Naive thymus-derived CD4-positive, alpha-beta T cell (primary cell): ENCODE measurements at regions of chr20 and their contacts with region 1.

Region 1: DNA sequence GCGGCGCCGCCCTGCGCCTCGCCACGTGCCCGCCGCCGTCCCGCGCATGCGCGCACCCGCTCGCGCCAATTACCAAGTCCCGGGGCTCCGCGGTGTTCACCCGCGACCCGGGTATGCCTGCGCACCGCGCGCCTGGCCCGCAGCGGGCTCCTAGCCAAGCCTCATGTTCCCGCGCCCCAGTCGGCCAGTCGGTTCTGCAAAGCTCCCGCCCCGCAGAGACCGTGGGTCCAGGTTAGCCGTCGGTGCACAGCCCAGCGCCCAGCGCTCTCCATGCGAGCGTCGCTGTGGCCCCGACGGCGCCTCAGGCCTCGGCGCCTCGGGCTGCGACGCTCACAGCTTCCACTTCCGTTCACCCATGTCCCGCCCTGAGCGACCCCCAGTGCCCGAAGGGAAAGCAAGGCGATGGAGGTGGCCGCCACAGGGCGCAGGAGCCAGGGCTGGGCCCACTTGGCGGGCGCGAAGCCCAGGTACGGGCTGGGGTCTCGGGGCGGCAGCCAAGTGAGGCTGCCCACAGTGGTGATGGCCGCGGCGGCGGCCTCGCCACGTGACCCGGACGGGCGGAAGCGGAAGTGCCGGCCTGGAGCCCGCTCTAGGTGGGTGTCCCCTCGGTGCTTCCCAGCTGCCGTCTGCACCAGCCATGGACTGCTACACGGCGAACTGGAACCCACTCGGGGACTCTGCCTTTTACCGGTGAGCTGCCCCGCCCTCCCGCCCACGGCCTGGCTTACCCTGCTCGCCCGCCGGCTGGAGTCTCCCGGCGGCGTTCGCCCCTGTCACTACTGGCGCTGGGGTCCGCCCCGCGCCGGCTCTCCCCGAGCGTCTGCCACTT is at the starts of genes PCED1A and VPS16:
- DNase-seq: peak; percentile 83 to 94 (median 90)
- ATAC-seq: peak; percentile 97
- H3K4me3 ChIP-seq: peak within 1 kb of the TSS; percentile 72
- H3K4me3 Mint-ChIP-seq: peak within 1 kb of the TSS; percentile 83 to 93 (median 90)
- H3K27ac ChIP-seq: peak within 1 kb of the TSS; percentile 77
- H3K27ac Mint-ChIP-seq: peak within 1 kb of the TSS; percentile 67 to 95 (median 92)
- H3K4me1 ChIP-seq: peaks cover 15 to 21% of the 10 kb centered on the region in 2 donors
- H3K4me1 Mint-ChIP-seq: peaks cover 18 to 48% (median 45%) of the 10 kb centered on the region in 7 donors
- H3K27me3 ChIP-seq: no peaks in the 10 kb centered on the region
- H3K27me3 Mint-ChIP-seq: no peaks in the 10 kb centered on the region
- total RNA-seq, gene PCED1A: 27.8 to 105 (median 72.5) TPM
- total RNA-seq, gene VPS16: 45.5 to 62.4 (median 56.1) TPM

Region 2: DNA sequence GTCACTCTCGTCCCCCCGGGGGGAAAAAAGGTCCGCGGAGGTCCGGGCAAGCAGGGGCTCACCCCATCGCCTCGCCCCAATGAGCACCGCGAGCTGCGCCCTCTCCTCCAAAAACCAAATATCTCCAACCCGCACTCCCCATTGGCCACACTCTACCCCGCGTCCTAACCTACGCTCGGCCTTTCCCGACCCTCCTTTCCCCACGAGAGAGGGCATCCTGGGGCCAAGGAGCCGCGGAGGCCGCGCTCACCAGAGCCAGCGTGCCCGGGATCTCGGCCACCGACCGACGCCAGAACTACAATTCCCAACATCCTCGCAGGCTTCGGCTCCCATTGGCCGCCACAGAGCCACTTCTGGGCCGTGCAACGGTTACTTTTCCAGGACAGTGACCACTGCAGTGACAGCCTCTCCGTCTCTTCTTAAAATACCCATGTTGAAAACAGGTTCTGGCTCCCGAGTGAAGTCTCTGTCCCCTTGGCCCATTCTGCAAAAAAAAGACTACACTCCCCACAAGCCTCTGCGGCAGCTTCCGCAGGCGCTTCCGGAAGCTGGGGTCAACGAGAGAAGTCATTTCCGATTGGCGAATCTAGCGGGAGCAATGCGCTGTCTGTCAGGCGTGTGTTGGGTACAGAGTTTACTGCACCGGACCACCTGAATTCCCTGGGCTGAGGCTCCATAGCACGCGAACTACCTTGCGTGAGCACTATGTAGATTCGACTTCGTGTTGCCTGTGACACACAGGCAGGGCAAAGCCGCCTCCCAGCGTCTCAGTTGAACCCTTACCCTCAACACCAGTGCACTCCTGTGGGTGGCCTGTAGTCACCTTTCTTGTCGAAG is 331.5 kb before region 1 on chr20 and contains the start of gene ZNF343:
- CTCF ChIA-PET with region 1: no interaction called
- POLR2A ChIA-PET with region 1: interaction called, 5 read pairs
- intact Hi-C with region 1: loop called in 1 of 2 experiments (anchors 2 kb)
- DNase-seq: peak; percentile 61 to 84 (median 82)
- ATAC-seq: peak; percentile 97
- H3K4me3 ChIP-seq: peak within 1 kb of the TSS; percentile 97
- H3K4me3 Mint-ChIP-seq: peak within 1 kb of the TSS; percentile 92 to 100 (median 98)
- H3K27ac ChIP-seq: peak within 1 kb of the TSS; percentile 84
- H3K27ac Mint-ChIP-seq: peak within 1 kb of the TSS; percentile 90 to 99 (median 98)
- H3K4me1 ChIP-seq: peaks cover 6 to 7% of the 10 kb centered on the region in 2 donors
- H3K4me1 Mint-ChIP-seq: peaks cover 11 to 30% (median 25%) of the 10 kb centered on the region in 7 donors
- H3K27me3 ChIP-seq: no peaks in the 10 kb centered on the region
- H3K27me3 Mint-ChIP-seq: peaks cover 8 to 28% (median 12%) of the 10 kb centered on the region in 5 donors
- total RNA-seq, gene ZNF343: 7.5 to 14.4 (median 11.8) TPM

Region 3: DNA sequence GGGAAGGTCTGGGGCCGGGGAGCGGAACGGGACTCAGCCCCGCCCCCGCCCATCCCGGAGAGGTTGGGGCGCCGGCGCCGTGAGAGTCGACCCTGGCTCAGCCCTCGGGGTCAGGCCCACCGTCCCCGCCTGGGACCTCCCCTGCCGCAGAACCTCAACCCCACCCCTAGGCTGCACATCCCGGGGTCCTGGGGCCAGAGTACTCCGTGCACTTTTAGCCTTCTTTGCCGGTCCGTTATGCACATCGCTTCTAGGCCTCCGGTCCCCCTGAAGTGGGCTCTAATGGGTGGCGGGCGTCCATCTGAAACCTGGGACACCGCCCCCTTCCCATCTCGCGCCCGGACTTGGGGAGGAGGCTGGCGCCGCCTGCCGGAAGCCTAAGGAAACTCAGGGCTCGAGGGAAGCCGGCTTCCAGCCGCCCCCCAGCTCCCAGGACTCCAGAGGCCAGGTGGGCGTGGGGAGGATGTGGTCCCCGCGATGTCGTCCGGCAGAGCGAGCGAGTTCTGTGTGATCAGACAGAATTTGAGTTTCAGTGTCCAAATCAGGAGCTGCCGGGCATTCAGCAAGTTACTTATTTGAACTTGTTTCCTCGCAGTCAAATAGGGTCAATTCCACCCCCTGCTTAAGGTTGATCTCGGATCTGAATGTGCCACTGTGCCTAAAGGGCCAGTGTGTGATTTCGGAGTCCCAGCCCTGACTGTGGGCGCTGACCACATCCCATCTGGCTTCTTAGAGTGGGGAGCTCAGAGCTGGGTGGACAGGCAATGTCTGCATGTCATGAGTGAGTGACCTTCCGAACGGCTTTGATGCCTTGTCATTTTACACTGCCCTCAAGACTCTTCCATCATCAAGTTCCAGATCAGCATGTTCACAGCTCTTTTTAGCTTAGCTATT is 87.5 kb before region 1 on chr20:
- CTCF ChIA-PET with region 1: no interaction called
- POLR2A ChIA-PET with region 1: no interaction called
- intact Hi-C with region 1: loop called (anchors 2 to 5 kb)
- DNase-seq: peak; percentile 36 to 63 (median 53)
- ATAC-seq: peak; percentile 48
- H3K4me3 ChIP-seq: peak overlapping the region; percentile 64
- H3K4me3 Mint-ChIP-seq: peak overlapping the region; percentile 74 to 90 (median 86)
- H3K27ac ChIP-seq: no peak overlapping the region
- H3K27ac Mint-ChIP-seq: peak overlapping the region in 8 of 9 donors; percentile 17 to 85 (median 56)
- H3K4me1 ChIP-seq: peaks cover 12 to 18% of the 10 kb centered on the region in 2 donors
- H3K4me1 Mint-ChIP-seq: peaks cover 20 to 35% (median 27%) of the 10 kb centered on the region in 7 donors
- H3K27me3 ChIP-seq: no peaks in the 10 kb centered on the region
- H3K27me3 Mint-ChIP-seq: peaks cover 6 to 54% (median 9%) of the 10 kb centered on the region in 5 donors

Region 4: DNA sequence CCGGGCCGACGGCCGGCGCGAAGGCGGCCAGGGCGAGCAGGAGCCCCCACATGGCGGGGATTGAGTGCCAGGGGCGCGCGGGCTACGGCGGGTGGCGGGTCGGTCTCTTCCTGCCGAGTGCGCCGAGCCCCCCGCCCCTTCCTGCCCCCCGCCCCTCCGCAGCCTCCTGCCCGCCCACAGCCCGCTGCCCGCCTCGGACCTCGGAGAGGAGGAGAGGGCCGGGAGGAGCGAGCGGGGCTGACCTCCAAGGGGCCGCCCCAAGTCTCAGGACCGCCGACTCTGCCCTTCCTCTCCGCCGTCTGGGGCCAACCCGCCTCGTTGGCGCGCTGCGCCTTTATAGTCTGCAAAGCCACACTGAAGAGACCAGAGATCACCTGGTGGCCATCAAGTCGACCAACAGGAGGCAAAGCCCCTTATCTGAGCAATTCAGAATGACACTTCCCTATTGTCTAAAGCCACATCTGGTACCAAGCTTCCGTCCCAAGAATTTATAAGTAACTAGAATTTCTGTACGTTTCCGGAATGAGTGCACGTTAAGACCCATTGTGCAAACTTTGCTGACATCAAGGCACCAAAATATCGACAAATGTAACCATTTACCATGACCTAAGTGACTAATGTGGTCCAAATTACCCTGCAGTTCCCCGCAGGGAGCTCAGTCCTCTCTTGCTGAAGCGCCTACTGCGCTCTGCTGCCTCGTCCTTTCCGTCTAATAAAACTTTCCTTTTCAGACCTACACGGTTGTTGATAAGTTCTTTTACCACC is 39.6 kb before region 1 on chr20 and contains the start of gene CPXM1:
- CTCF ChIA-PET with region 1: no interaction called
- POLR2A ChIA-PET with region 1: interaction called, 3 read pairs
- intact Hi-C with region 1: loop called in 1 of 2 experiments (anchors 2 kb)
- DNase-seq: no peak
- ATAC-seq: peak; percentile 61
- H3K4me3 ChIP-seq: peak within 1 kb of the TSS; percentile 55
- H3K4me3 Mint-ChIP-seq: peak within 1 kb of the TSS; percentile 86 to 99 (median 90)
- H3K27ac ChIP-seq: no peak within 1 kb of the TSS
- H3K27ac Mint-ChIP-seq: peak within 1 kb of the TSS in 3 of 9 donors; percentile 34 to 69 (median 55)
- H3K4me1 ChIP-seq: peaks cover 0 to 7% of the 10 kb centered on the region in 2 donors
- H3K4me1 Mint-ChIP-seq: peaks cover 19 to 29% (median 25%) of the 10 kb centered on the region in 7 donors
- H3K27me3 ChIP-seq: peaks cover 0 to 12% of the 10 kb centered on the region in 2 donors
- H3K27me3 Mint-ChIP-seq: peaks cover 55 to 70% (median 65%) of the 10 kb centered on the region in 5 donors
- total RNA-seq, gene CPXM1: 0.19 to 1.8 (median 0.32) TPM

Region 5: DNA sequence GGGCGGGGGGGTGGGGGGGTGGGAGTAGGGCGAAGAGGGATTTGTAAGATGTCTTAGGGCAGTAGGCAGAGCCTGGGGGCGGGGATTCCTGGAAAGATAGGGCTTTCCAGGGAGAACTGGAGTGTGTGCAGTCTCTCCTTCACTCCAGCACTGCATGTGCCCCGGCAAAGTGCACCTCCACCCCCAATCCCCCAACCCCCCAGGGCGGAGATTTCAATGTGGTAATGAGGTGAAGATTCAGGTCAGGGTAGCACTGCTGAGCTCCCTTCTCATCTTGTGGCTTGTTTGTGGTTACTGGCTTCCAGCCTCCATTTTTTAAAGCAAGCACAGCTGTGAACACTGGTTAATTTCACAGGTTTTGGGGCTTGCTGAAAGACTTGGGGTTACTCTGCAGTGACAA is 18.3 kb before region 1 on chr20:
- CTCF ChIA-PET with region 1: no interaction called
- POLR2A ChIA-PET with region 1: interaction called, 15 read pairs
- intact Hi-C with region 1: no loop called
- DNase-seq: peak in 7 of 9 donors; percentile 53 to 67 (median 62)
- ATAC-seq: peak; percentile 90
- H3K4me3 ChIP-seq: no peak overlapping the region
- H3K4me3 Mint-ChIP-seq: peak overlapping the region in 9 of 10 donors; percentile 60 to 86 (median 73)
- H3K27ac ChIP-seq: no peak overlapping the region
- H3K27ac Mint-ChIP-seq: peak overlapping the region in 2 of 9 donors; percentile 56
- H3K4me1 ChIP-seq: peaks cover 14 to 18% of the 10 kb centered on the region in 2 donors
- H3K4me1 Mint-ChIP-seq: peaks cover 25 to 35% (median 34%) of the 10 kb centered on the region in 7 donors
- H3K27me3 ChIP-seq: no peaks in the 10 kb centered on the region
- H3K27me3 Mint-ChIP-seq: peaks cover 8 to 57% (median 23%) of the 10 kb centered on the region in 5 donors

Region 6: DNA sequence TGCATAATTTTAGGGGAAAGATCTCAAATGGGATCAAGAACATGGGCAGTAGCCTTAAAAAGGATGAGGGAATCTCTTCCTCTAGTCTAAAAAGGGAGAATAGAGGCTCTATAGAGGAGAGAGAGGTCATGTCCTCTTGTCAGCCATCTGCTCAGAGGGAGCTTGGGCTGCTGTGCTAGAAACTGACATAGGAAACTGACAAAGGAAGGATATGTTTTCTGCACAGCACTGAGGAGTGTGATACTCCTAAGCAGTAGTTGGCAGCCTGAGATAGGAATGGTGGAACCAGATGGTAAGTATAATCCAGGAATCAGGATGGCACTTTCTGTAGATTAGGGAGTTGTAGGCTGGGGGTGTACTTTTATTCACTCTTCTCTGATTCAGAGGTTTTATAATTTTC is 92.1 kb after region 1 on chr20:
- CTCF ChIA-PET with region 1: no interaction called
- POLR2A ChIA-PET with region 1: no interaction called
- intact Hi-C with region 1: no loop called
- DNase-seq: no peak
- ATAC-seq: no peak
- H3K4me3 ChIP-seq: no peak overlapping the region
- H3K4me3 Mint-ChIP-seq: no peak overlapping the region
- H3K27ac ChIP-seq: no peak overlapping the region
- H3K27ac Mint-ChIP-seq: no peak overlapping the region
- H3K4me1 ChIP-seq: no peaks in the 10 kb centered on the region
- H3K4me1 Mint-ChIP-seq: peaks cover under 1 to 14% (median 5%) of the 10 kb centered on the region in 7 donors
- H3K27me3 ChIP-seq: no peaks in the 10 kb centered on the region
- H3K27me3 Mint-ChIP-seq: no peaks in the 10 kb centered on the region

Region 7: GRCh38 chr20:3045816-3046676 is 205.7 kb after region 1 on chr20 and contains the start of gene MRPS26:
- CTCF ChIA-PET with region 1: no interaction called
- POLR2A ChIA-PET with region 1: interaction called, 3 read pairs
- intact Hi-C with region 1: loop called in 1 of 2 experiments (anchors 1 kb)
- DNase-seq: peak; percentile 63 to 89 (median 76)
- ATAC-seq: peak; percentile 93
- H3K4me3 ChIP-seq: peak within 1 kb of the TSS; percentile 91
- H3K4me3 Mint-ChIP-seq: peak within 1 kb of the TSS; percentile 82 to 95 (median 92)
- H3K27ac ChIP-seq: peak within 1 kb of the TSS; percentile 70
- H3K27ac Mint-ChIP-seq: peak within 1 kb of the TSS; percentile 69 to 90 (median 79)
- H3K4me1 ChIP-seq: peaks cover 4 to 11% of the 10 kb centered on the region in 2 donors
- H3K4me1 Mint-ChIP-seq: peaks cover 11 to 23% (median 18%) of the 10 kb centered on the region in 7 donors
- H3K27me3 ChIP-seq: no peaks in the 10 kb centered on the region
- H3K27me3 Mint-ChIP-seq: no peaks in the 10 kb centered on the region
- total RNA-seq, gene MRPS26: 22.2 to 41.6 (median 29.5) TPM